ENCODE measurements at regions of chr2 and their contacts with region 1.

Region 1: DNA sequence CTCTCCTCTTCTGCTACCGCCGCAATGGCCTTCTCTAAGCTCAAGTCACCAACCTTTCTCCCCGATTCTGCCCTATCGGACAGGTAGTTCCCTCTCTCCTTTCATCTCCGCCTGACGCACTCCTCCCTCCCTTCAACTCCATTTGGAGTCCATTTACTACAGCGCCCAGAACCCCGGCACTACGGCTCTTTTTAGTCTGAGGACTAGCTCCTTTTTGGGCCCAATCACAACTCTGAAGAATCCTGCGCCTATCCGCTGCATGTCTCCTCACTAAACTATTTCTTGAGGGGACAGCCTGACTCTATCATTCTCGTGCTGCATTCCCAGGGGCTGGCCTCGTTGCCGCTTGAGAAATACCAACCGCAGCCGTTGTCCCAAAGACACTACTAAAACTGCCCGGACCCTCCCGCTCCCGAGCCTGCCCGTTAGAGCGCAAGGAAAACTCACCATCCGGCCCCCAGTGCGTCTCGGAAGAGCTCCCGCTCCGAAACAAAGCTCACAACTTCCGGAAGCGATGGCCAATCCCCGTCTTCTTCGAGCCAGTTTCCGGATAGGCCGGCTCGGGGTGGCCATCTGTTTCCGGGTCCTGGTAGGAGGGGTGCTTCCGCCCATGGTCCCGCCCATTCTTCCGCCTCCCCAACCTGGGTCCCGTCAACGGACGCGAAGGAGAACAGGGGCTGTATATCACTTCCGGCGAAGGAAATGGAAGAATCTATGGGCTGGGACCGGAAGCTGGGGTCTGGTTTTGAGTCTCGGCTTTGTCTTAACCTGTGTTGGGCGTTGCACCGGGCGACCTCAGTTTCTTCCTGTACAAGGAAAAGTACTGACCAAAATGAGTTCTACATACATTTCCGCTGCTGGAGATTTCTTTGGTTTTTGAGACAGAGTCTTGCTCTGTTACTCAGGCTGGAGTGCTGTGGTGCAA is at the start of gene TPRKB:
- DNase-seq: peak; percentile 73 to 95 (median 94)
- ATAC-seq: peak; percentile 99
- H3K4me3 ChIP-seq: peak within 1 kb of the TSS; percentile 78
- H3K4me3 Mint-ChIP-seq: peak within 1 kb of the TSS; percentile 92 to 98 (median 98)
- H3K27ac ChIP-seq: peak within 1 kb of the TSS; percentile 67
- H3K27ac Mint-ChIP-seq: peak within 1 kb of the TSS; percentile 85 to 97 (median 91)
- H3K4me1 ChIP-seq: peaks cover 8 to 14% of the 10 kb centered on the region in 2 donors
- H3K4me1 Mint-ChIP-seq: peaks cover 10 to 31% (median 21%) of the 10 kb centered on the region in 7 donors
- H3K27me3 ChIP-seq: no peaks in the 10 kb centered on the region
- H3K27me3 Mint-ChIP-seq: peaks cover 0 to 2% (median 0%) of the 10 kb centered on the region in 5 donors
- total RNA-seq, gene TPRKB: 16.5 to 34.6 (median 27.5) TPM

Region 2: DNA sequence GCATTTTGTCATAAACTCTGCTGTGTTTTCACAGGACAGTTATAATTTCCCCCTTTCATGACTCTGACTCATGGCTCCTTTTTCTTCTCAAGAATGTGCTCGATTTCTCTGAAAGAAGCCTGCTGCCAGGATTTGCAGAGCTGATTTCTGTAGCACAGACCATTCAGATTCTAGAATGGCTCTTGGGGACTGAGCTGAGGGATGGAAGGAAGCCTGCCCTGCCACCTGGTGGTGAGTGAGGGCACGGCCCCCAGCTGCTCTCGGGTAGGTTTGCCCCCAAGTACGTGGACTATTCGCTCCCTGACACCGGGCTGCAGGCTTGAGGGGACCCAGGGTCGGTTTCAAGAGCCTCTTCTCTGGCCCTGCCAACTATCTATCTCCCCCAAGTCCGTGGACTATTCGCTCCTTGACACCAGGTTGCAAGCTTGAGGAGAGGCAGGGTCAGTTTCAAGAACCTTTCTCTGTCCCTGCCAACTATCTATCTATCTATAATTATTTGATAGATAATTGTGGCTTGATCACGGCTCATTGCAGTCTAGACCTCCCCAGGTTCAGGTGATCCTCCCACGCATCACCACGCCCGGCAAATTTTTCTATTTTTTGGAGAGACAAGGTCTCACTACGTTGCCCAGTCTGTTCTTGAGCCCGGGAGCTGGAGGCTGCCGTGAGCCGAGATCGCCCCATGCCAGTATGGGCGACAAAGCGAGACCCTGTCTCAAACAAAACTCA is 524.5 kb before region 1 on chr2:
- CTCF ChIA-PET with region 1: no interaction called
- POLR2A ChIA-PET with region 1: no interaction called
- intact Hi-C with region 1: loop called in 1 of 2 experiments (anchors 1 kb)
- DNase-seq: peak; percentile 48 to 71 (median 64)
- ATAC-seq: peak; percentile 76
- H3K4me3 ChIP-seq: no peak overlapping the region
- H3K4me3 Mint-ChIP-seq: peak overlapping the region in 8 of 10 donors; percentile 15 to 97 (median 62)
- H3K27ac ChIP-seq: no peak overlapping the region
- H3K27ac Mint-ChIP-seq: peak overlapping the region in 6 of 9 donors; percentile 40 to 98 (median 91)
- H3K4me1 ChIP-seq: peaks cover 14 to 18% of the 10 kb centered on the region in 2 donors
- H3K4me1 Mint-ChIP-seq: peaks cover 16 to 44% (median 36%) of the 10 kb centered on the region in 7 donors
- H3K27me3 ChIP-seq: no peaks in the 10 kb centered on the region
- H3K27me3 Mint-ChIP-seq: peaks cover 4 to 8% (median 7%) of the 10 kb centered on the region in 5 donors

Region 3: GRCh38 chr2:73779467-73780236 is 42.5 kb after region 1 on chr2 and contains the start of gene DUSP11:
- CTCF ChIA-PET with region 1: no interaction called
- POLR2A ChIA-PET with region 1: interaction called, 6 read pairs
- intact Hi-C with region 1: loop called (anchors 1 kb)
- DNase-seq: peak; percentile 92 to 98 (median 95)
- ATAC-seq: peak; percentile 100
- H3K4me3 ChIP-seq: peak within 1 kb of the TSS; percentile 87
- H3K4me3 Mint-ChIP-seq: peak within 1 kb of the TSS; percentile 95 to 100 (median 98)
- H3K27ac ChIP-seq: peak within 1 kb of the TSS; percentile 95
- H3K27ac Mint-ChIP-seq: peak within 1 kb of the TSS; percentile 95 to 100 (median 98)
- H3K4me1 ChIP-seq: peaks cover 0 to 16% of the 10 kb centered on the region in 2 donors
- H3K4me1 Mint-ChIP-seq: peaks cover 23 to 49% (median 35%) of the 10 kb centered on the region in 7 donors
- H3K27me3 ChIP-seq: no peaks in the 10 kb centered on the region
- H3K27me3 Mint-ChIP-seq: peaks cover 0 to 4% (median 4%) of the 10 kb centered on the region in 5 donors
- total RNA-seq, gene DUSP11: 32.0 to 54.1 (median 43.8) TPM

Region 4: GRCh38 chr2:74178201-74179062 is 441.3 kb after region 1 on chr2 and contains the start of gene MOB1A:
- CTCF ChIA-PET with region 1: no interaction called
- POLR2A ChIA-PET with region 1: interaction called, 4 read pairs
- intact Hi-C with region 1: loop called in 1 of 2 experiments (anchors 1 kb)
- DNase-seq: peak; percentile 94 to 98 (median 97)
- ATAC-seq: peak; percentile 97
- H3K4me3 ChIP-seq: peak within 1 kb of the TSS; percentile 89
- H3K4me3 Mint-ChIP-seq: peak within 1 kb of the TSS; percentile 86 to 95 (median 91)
- H3K27ac ChIP-seq: peak within 1 kb of the TSS; percentile 97
- H3K27ac Mint-ChIP-seq: peak within 1 kb of the TSS; percentile 82 to 95 (median 90)
- H3K4me1 ChIP-seq: peaks cover 25 to 37% of the 10 kb centered on the region in 2 donors
- H3K4me1 Mint-ChIP-seq: peaks cover 32 to 46% (median 35%) of the 10 kb centered on the region in 7 donors
- H3K27me3 ChIP-seq: no peaks in the 10 kb centered on the region
- H3K27me3 Mint-ChIP-seq: no peaks in the 10 kb centered on the region
- total RNA-seq, gene MOB1A: 113 to 185 (median 140) TPM

Region 5: DNA sequence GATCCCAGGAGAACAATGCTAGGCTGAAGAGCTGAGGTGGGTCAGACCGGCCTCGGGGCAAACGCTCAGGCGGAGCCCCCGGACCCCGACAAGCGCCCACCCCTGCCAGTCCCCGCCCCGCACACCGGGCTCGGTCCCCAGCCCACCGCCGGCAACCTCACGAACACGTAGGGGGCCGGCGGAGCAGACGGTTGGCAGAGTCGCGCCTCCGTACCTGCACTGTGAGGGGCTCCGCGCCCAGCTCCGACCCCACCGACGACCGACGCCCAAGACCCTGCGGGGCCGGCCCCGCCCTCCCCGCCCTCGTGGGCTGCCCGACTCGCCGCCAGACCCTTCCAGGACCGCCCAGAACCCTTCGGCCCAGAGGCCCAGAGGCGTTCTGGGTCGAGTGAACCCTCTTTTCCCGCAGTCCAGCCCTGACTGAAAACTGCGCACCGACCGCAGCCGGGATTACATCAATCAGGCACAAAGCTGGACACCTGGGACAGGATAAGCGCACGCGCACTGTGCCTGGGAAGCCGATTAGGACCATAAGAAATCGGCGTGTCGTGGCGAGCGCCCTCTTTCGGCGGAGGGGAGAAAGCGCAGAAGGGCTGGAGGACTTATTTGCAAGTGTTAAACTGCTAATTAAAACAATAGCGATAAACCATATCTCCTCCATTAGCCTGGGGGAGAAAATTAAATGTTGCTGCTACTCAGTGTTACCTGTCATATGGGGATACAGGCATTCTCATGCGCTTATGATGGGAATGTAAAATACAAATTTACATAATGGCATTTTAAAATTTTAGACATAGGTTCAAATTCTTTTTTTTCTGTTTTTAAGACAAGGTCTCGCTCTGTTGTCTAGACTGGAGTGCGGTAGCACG is 654.7 kb after region 1 on chr2:
- CTCF ChIA-PET with region 1: no interaction called
- POLR2A ChIA-PET with region 1: no interaction called
- intact Hi-C with region 1: loop called in 1 of 2 experiments (anchors 2 kb)
- DNase-seq: peak; percentile 89 to 99 (median 93)
- ATAC-seq: peak; percentile 97
- H3K4me3 ChIP-seq: peak overlapping the region; percentile 78
- H3K4me3 Mint-ChIP-seq: peak overlapping the region in 4 of 10 donors; percentile 40 to 100 (median 92)
- H3K27ac ChIP-seq: peak overlapping the region; percentile 91
- H3K27ac Mint-ChIP-seq: peak overlapping the region in 8 of 9 donors; percentile 98 to 100 (median 99)
- H3K4me1 ChIP-seq: peaks cover 8 to 25% of the 10 kb centered on the region in 2 donors
- H3K4me1 Mint-ChIP-seq: peaks cover 0 to 15% (median 5%) of the 10 kb centered on the region in 7 donors
- H3K27me3 ChIP-seq: no peaks in the 10 kb centered on the region
- H3K27me3 Mint-ChIP-seq: peaks cover 0 to 14% (median 5%) of the 10 kb centered on the region in 5 donors

Region 6: GRCh38 chr2:74482801-74483674 is 745.9 kb after region 1 on chr2 and contains the starts of genes CCDC142 and TTC31:
- CTCF ChIA-PET with region 1: no interaction called
- POLR2A ChIA-PET with region 1: interaction called, 5 read pairs
- intact Hi-C with region 1: loop called (anchors 1 kb)
- DNase-seq: peak; percentile 76 to 96 (median 96)
- ATAC-seq: peak; percentile 96
- H3K4me3 ChIP-seq: peak within 1 kb of the TSS; percentile 99
- H3K4me3 Mint-ChIP-seq: peak within 1 kb of the TSS; percentile 91 to 100 (median 98)
- H3K27ac ChIP-seq: peak within 1 kb of the TSS; percentile 85
- H3K27ac Mint-ChIP-seq: peak within 1 kb of the TSS; percentile 93 to 100 (median 99)
- H3K4me1 ChIP-seq: peaks cover 22 to 26% of the 10 kb centered on the region in 2 donors
- H3K4me1 Mint-ChIP-seq: peaks cover 21 to 59% (median 41%) of the 10 kb centered on the region in 7 donors
- H3K27me3 ChIP-seq: no peaks in the 10 kb centered on the region
- H3K27me3 Mint-ChIP-seq: no peaks in the 10 kb centered on the region
- total RNA-seq, gene CCDC142: 21.4 to 75.2 (median 33.8) TPM
- total RNA-seq, gene TTC31: 35.5 to 50.4 (median 43.6) TPM